H1 (cell line): ENCODE measurements at regions of chr1 and their contacts with region 1.

Region 1: DNA sequence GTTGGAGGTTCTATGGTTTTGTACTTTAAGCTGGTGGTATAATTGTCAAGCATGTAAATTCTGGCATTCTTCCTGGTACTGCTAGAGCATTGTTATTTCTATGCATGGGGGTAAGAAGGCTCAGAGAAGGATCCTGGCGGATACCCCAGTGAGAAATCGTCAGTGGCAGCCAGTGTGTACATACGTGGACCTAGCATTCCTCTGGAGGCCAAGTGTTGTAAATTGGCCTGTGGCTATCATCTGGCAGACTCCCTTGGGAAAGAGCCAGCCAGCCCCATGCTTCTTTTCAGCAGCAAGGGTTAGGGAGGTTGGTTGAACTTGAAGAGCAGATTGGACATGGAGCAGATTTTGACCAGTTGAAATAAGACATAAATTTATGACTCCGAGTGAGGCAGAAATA is 5.2 kb upstream of the AGO3 start:
- DNase-seq: no peak
- H3K4me3 ChIP-seq: no peak overlapping the region
- H3K27ac ChIP-seq: no peak overlapping the region
- H3K4me1 ChIP-seq: no peaks in the 10 kb centered on the region; a peak in 1 of 7 replicates
- H3K27me3 ChIP-seq: no peaks in the 10 kb centered on the region
- CTCF ChIP-seq: no peak
- EP300 ChIP-seq: no peak
- POLR2A ChIP-seq: no peak
- RAD21 ChIP-seq: no peak

Region 2: GRCh38 chr1:35762141-35762540 is 163.6 kb before region 1 on chr1:
- CTCF ChIA-PET with region 1: no interaction called
- POLR2A ChIA-PET with region 1: no interaction called
- DNase-seq: no peak
- H3K4me3 ChIP-seq: no peak overlapping the region
- H3K27ac ChIP-seq: no peak overlapping the region
- H3K4me1 ChIP-seq: no peaks in the 10 kb centered on the region
- H3K27me3 ChIP-seq: no peaks in the 10 kb centered on the region
- CTCF ChIP-seq: no peak
- EP300 ChIP-seq: no peak
- POLR2A ChIP-seq: no peak
- RAD21 ChIP-seq: no peak

Region 3: GRCh38 chr1:35825255-35825654 is 100.5 kb before region 1 on chr1:
- CTCF ChIA-PET with region 1: no interaction called
- POLR2A ChIA-PET with region 1: no interaction called
- DNase-seq: peak in 1 of 2 experiments; percentile 13
- H3K4me3 ChIP-seq: no peak overlapping the region
- H3K27ac ChIP-seq: no peak overlapping the region
- H3K4me1 ChIP-seq: no peaks in the 10 kb centered on the region
- H3K27me3 ChIP-seq: no peaks in the 10 kb centered on the region
- CTCF ChIP-seq: no peak
- EP300 ChIP-seq: no peak
- POLR2A ChIP-seq: no peak
- RAD21 ChIP-seq: no peak

Region 4: GRCh38 chr1:35915693-35916092 is 10.0 kb before region 1 on chr1:
- CTCF ChIA-PET with region 1: interaction called, 7 read pairs
- POLR2A ChIA-PET with region 1: interaction called, 20 read pairs
- DNase-seq: no peak
- H3K4me3 ChIP-seq: no peak overlapping the region
- H3K27ac ChIP-seq: no peak overlapping the region
- H3K4me1 ChIP-seq: no peaks in the 10 kb centered on the region
- H3K27me3 ChIP-seq: no peaks in the 10 kb centered on the region; a peak in 1 of 7 replicates
- CTCF ChIP-seq: no peak
- EP300 ChIP-seq: no peak
- POLR2A ChIP-seq: no peak
- RAD21 ChIP-seq: no peak